A549 (cell line): ENCODE measurements at regions of chr1 and their contacts with region 1.

Region 1: DNA sequence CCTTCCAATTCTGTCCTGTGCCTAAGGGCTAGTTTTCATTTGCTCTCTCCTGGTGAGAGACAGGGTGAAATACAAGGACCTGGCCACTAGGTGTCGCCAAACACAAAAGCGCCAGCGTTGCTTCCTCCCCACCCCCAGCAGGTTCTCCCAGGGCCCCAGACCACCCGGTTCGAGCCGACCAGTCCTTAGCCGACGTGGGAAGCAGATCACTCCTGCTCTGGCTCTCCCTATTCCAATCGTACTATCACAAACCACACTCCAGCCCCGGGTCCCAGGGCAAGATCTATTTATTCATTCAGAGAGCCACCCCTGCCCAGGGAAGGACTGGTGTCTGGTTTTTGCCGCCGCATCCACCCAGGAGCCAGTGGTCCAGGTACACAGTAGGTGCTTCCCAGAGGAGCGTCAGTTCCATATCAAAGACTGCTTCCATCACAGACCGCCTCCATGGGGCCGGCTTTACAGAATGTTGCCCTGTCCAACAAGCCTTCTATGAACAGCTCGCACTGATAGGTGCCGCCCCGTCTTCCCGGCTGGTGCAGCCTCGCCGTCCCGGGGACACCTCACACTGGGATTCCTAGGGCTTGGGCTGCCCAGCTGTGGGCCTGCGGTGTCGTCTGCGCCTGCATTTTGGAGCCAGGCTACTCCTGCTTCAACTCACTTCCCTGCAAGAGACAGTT is 35.0 kb downstream of the CTNNBIP1 start:
- DNase-seq: peak; percentile 51 to 91
- ATAC-seq: peak; percentile 80 to 91
- H3K4me3 ChIP-seq: no peak overlapping the region
- H3K27ac ChIP-seq: peak overlapping the region; percentile 40 to 64; a peak in 3 of 6 replicates
- H3K4me1 ChIP-seq: peaks cover 3% of the 10 kb centered on the region; the same call in 1 of the 3 replicates
- CTCF ChIP-seq: peak; percentile 87
- EP300 ChIP-seq: no peak
- POLR2A ChIP-seq: no peak
- RAD21 ChIP-seq: peak; percentile 84 to 85

Region 2: DNA sequence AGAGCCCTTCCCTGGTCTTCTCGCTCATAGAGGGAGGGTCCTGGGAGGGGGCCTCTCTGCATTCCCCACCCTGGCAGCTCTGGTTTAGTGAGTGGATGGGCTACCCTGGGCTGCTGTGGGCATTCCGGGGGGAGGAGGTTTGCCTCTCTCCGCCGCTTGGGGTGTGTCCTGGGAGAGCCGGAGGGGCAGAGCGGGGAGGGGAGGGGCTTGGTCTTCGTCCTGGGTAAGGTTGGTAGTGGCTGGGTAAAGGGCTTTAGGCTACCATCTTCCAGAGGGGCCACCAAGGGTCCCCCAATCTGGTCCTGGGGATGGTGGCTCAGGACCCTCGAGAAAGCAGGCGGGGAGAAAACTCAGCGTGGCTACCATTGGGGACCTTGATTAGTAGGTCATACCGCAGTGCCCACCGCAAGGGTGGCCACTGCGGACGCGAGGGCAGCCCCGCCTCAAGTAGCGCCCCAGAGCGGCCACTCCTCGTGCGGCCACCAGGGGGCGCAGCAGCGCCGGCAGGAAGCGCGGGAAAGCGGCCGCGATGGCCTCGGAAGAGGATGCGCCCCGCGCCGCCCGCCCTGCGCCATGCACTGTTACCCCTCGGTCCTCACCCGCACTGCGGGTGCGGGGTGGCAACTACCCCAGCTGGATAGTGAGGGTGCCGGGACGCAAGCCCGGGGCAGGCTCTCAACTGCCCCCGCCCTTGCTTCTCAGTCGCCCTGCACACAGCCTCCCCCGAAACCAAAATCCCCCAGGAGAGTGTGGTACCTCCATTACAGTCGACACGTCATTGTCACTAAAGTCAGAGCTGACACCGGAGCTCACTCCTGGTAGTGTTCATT is 380.0 kb before region 1 on chr1:
- CTCF ChIA-PET with region 1: no interaction called
- POLR2A ChIA-PET with region 1: no interaction called
- DNase-seq: peak; percentile 32 to 60
- ATAC-seq: peak; percentile 78 to 90
- H3K4me3 ChIP-seq: peak overlapping the region; percentile 34; the same call in 2 of the 3 replicates
- H3K27ac ChIP-seq: peak overlapping the region in 1 of 2 experiments; percentile 73; a peak in 3 of 6 replicates
- H3K4me1 ChIP-seq: 0 out of 3 replicates have a peak, but pooled peaks cover 3% of the 10 kb centered on the region
- CTCF ChIP-seq: peak; percentile 88
- EP300 ChIP-seq: no peak
- POLR2A ChIP-seq: no peak
- RAD21 ChIP-seq: peak; percentile 54 to 63

Region 3: DNA sequence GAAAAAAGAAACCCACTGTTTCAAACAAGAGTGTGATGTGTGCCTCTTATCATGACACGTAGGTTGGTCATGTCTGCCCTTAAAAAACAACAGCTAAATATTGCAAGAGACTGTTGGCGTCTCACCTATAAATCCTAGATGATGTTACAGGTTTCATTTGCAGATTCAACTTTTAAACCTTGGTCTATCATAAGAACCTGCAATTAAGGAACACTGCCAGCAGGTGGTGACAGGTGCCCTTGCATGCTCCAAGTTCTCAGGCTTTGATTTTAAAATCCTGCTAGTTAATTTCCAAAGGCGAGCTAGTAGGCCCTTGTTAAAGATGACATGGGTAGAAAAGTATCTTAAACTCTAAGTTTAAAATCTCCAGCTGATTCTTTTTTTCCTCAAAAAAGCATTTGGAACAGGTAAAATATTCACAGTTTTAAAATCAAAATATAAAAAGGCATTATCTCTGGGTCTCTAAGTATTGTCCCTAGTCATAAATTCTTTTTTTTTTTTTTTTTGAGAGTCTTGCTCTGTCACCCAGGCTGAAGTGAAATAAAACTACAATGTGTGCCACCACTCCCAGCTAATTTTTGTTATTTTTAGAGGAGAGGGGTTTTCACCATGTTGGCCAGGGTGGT is 90.5 kb before region 1 on chr1:
- CTCF ChIA-PET with region 1: interaction called, 10 read pairs
- POLR2A ChIA-PET with region 1: no interaction called
- DNase-seq: peak; percentile 34 to 74
- ATAC-seq: peak; percentile 66 to 72; a peak in 4 of 6 replicates
- H3K4me3 ChIP-seq: no peak overlapping the region
- H3K27ac ChIP-seq: no peak overlapping the region
- H3K4me1 ChIP-seq: peaks cover 9% of the 10 kb centered on the region; the same call in 1 of the 3 replicates
- CTCF ChIP-seq: peak; percentile 68
- EP300 ChIP-seq: no peak
- POLR2A ChIP-seq: no peak
- RAD21 ChIP-seq: peak; percentile 77 to 80

Region 4: DNA sequence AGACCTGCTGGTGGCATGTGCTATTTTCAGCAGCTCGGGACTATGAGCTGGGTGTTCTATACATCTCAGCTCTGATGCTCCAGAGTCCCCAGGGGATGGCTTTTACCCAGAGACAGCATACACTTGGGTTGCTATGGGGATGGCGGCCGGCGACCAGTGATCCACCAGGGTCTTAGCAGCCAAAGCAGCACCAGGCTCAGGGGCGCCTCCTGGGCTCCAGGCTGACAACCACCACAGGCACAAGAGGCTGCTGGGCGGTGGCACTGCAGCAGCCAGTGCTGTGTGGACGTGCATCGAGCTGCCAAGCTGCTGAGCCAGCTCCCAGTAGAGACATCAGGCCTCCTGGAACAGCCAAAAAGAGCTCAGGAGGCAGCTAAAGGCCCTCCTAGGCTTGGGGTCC is 13.7 kb before region 1 on chr1:
- CTCF ChIA-PET with region 1: interaction called, 52 read pairs
- POLR2A ChIA-PET with region 1: no interaction called
- DNase-seq: no peak
- ATAC-seq: peak in 1 of 2 experiments; percentile 46; a peak in 1 of 6 replicates
- H3K4me3 ChIP-seq: no peak overlapping the region
- H3K27ac ChIP-seq: no peak overlapping the region
- H3K4me1 ChIP-seq: no peaks in the 10 kb centered on the region
- CTCF ChIP-seq: no peak
- EP300 ChIP-seq: no peak
- POLR2A ChIP-seq: no peak
- RAD21 ChIP-seq: no peak

Region 5: GRCh38 chr1:9886092-9886742 is 11.1 kb after region 1 on chr1:
- CTCF ChIA-PET with region 1: interaction called, 21 read pairs
- POLR2A ChIA-PET with region 1: no interaction called
- DNase-seq: no peak
- ATAC-seq: no peak
- H3K4me3 ChIP-seq: no peak overlapping the region
- H3K27ac ChIP-seq: no peak overlapping the region
- H3K4me1 ChIP-seq: peaks cover 14% of the 10 kb centered on the region
- CTCF ChIP-seq: no peak
- EP300 ChIP-seq: no peak
- POLR2A ChIP-seq: no peak
- RAD21 ChIP-seq: no peak

Region 6: DNA sequence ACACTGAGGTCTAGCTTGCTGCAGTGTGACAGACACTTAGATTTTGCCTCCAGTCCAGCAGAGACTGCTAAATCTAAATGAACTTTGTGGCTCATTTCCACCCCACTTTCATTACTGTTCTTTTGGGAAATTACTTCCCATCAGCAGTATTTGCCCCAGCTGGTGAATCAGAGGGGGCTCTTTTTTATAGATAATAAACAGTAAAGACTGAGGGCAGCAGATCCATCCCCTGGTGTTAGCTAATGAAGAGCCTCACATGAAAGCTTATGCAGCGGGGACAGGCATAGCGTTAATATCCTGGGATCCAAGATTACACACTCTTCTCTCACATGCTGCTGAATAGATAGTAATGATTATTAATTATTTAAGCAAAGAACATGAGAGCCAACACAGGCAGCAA is 41.4 kb after region 1 on chr1:
- CTCF ChIA-PET with region 1: interaction called, 14 read pairs
- POLR2A ChIA-PET with region 1: no interaction called
- DNase-seq: no peak
- ATAC-seq: no peak
- H3K4me3 ChIP-seq: no peak overlapping the region
- H3K27ac ChIP-seq: no peak overlapping the region
- H3K4me1 ChIP-seq: peaks cover 2% of the 10 kb centered on the region; the same call in 1 of the 3 replicates
- CTCF ChIP-seq: no peak
- EP300 ChIP-seq: no peak
- POLR2A ChIP-seq: no peak
- RAD21 ChIP-seq: no peak

Region 7: DNA sequence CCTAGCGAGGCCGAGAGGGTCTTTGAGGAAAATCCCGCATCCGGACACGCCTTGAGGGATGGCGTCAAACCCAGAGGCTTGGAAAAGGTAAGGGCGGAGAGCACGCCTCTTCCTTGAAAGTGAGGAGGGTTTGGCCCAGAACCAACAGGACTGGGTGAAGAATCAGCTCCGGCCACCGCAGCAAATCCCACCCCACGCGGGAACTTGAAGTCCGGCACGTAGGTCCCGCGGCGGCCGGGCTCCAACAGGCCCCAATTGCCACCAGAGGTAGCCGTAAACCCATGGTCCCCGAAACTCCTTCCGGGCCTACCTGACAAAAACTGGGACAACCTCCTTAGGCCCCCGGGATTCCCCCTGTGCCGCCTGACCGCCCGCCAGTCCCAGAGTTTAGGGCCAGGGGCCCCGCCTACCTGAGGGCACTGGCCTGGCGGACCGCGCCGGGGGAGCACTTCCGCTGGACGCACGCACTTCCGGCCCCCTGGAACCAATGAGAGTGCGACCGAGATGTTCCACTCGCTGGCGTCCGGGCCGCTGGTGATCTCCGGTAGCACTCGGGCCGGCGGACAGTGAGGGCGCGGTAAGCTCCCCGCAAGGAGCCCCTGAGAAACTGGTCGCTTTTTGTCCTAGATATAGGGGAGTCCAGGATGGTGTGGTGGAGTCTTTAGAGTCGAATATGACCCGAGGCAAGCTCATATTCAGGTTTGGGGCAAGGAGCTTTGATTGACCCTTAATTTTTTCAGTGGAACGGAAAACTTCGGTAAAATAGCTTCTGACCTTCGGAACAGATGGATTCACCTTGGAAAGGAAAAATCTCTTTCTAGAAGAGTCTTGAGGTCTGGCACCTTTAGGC is 68.1 kb after region 1 on chr1 and contains the starts of genes LZIC and NMNAT1:
- CTCF ChIA-PET with region 1: interaction called, 43 read pairs
- POLR2A ChIA-PET with region 1: no interaction called
- DNase-seq: peak; percentile 83 to 95
- ATAC-seq: peak; percentile 99
- H3K4me3 ChIP-seq: peak within 1 kb of the TSS; percentile 98
- H3K27ac ChIP-seq: peak within 1 kb of the TSS; percentile 94 to 98
- H3K4me1 ChIP-seq: peaks cover 10% of the 10 kb centered on the region; the same call in 1 of the 3 replicates
- CTCF ChIP-seq: no peak
- EP300 ChIP-seq: no peak
- POLR2A ChIP-seq: peak; percentile 79
- RAD21 ChIP-seq: no peak
- polyA plus RNA-seq, gene LZIC: 23.8 and 29.0 TPM in 2 replicates
- polyA plus RNA-seq, gene NMNAT1: 4.9 and 5.3 TPM in 2 replicates